IMR-90 (cell line): ENCODE measurements at regions of chr5 and their contacts with region 1.

Region 1: GRCh38 chr5:72799721-72800120 is 16.7 kb upstream of the TNPO1 start:
- DNase-seq: no peak
- ATAC-seq: no peak
- H3K4me3 ChIP-seq: no peak overlapping the region
- H3K27ac ChIP-seq: no peak overlapping the region
- H3K4me1 ChIP-seq: no peaks in the 10 kb centered on the region
- H3K27me3 ChIP-seq: peaks cover 7% of the 10 kb centered on the region; the same call in 1 of the 2 replicates
- CTCF ChIP-seq: no peak
- POLR2A ChIP-seq: no peak
- RAD21 ChIP-seq: no peak

Region 2: GRCh38 chr5:72760259-72760658 is 39.5 kb before region 1 on chr5:
- CTCF ChIA-PET with region 1: no interaction called
- POLR2A ChIA-PET with region 1: no interaction called
- dilution Hi-C with region 1: no loop called
- in situ Hi-C with region 1: no loop called
- intact Hi-C with region 1: loop called (anchors 5 kb)
- DNase-seq: peak; percentile 53
- ATAC-seq: peak; percentile 77
- H3K4me3 ChIP-seq: no peak overlapping the region
- H3K27ac ChIP-seq: no peak overlapping the region
- H3K4me1 ChIP-seq: no peaks in the 10 kb centered on the region
- H3K27me3 ChIP-seq: no peaks in the 10 kb centered on the region; the same call in 1 of the 2 replicates
- CTCF ChIP-seq: no peak
- POLR2A ChIP-seq: no peak
- RAD21 ChIP-seq: no peak